Left colon (tissue), 2 donors: ENCODE measurements at regions of chr11 and their contacts with region 1.

Region 1: DNA sequence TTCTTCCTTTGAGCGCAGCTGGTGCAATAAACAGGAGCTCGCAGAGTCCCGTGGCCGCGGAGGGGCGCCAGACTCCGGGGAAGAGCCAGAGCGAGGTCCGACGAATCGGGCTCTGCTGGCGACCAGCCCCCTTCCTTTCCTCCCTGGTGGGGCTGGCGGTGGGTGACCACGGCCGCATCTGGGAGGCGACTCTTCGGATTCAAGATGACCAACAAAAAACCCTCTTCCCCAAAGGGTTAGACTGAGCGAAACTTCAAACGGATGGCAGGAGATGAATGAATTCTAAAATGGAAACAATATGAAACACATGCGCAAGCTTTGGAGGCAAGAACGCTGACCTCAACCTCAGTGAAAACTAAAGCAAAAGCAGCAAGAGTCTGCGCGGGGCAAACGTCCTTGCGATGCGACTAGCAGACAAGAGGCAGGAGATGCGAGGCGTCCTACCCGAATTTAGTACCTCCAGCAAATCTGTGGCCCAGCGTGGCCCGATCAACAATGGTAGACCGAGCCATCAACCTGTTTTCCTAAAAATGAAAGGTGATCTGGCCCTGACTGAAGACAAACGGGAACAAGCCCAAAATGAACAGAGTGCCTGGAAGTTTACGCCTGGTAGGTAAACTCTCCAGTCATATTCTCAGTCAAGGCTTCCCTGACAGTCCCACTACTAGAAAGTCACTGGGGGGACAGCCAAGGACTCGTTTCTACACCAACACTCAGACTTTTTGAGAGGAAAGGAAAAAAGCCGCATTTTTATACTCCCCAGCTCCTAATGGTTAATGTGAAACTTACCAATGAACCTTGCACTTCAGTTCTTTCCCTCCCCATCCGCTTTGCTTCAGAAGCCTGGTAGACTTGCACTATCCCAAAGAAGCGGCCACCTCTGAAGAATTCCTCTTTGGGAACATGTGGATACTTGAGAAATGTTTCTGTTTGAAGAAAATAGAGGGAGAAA is 11.6 kb downstream of the MMP3 start:
- DNase-seq: peak; percentile 32 to 61
- ATAC-seq: peak; percentile 83

Region 2: DNA sequence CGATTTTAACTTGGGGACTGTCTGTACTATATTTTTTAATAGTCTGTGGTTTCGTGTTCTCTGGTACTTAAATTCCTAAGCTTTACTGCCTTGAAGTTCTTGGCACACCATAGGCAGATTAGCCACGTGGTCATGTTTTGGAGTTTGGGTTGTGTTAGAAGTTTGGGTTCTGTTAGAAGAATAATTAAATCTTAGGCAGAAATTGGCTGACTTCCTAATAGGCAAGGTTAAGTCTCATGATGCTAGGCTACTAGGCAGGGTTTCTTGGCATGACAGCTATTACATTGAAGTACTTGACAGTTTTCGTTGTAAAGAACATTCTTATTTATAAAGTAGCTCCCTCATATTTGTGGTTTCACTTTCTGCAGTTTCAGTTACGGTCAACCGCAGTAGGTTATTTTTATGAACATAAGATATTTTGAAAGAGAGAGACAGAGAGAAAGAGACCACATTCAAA is 271.2 kb before region 1 on chr11:
- intact Hi-C with region 1: no loop called
- DNase-seq: no peak
- ATAC-seq: no peak

Region 3: GRCh38 chr11:102757823-102758549 is 73.8 kb before region 1 on chr11:
- intact Hi-C with region 1: no loop called
- DNase-seq: no peak
- ATAC-seq: peak; percentile 49

Region 4: DNA sequence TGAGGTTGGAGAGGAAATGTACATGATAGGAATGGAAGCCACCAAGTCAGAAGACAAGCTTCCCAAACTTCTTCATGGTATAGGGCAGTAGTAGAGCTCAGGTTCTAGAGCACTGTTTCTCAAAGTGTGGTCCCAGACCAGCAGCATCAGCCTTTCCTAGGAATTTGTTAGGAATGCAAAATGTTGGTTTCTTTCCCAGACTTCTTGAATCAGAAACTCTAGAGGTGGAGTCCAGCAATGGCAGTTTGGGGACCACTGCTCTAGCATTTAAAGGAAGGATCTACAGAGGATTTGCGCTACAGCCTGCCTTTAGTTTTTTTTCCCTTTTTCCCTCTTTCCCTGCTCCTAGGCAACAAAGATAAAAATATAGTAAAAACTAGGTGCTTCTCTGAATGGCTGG is 60.0 kb after region 1 on chr11:
- intact Hi-C with region 1: loop called in 1 of 2 experiments (anchors 10 kb)
- DNase-seq: no peak
- ATAC-seq: no peak

Region 5: DNA sequence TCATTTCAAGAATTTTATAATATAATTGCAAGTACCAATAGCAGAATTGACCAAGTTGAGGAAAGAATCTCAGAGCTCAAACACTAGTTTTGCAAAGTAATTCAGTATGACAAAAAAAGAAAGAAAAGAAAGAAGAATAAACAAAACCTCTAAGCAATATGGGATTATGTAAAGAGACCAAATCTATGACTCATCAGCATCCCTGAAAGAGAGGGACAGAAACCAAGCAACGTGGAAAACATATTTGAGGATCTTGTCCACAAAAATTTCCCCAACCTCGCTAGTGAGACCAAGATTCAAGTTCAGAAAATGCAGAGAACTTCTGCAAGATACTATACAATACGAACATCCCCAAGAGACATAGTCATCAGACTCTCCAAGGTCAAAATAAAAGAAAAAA is 1001.0 kb after region 1 on chr11:
- intact Hi-C with region 1: no loop called
- DNase-seq: no peak
- ATAC-seq: no peak